GM10248 (cell line): ENCODE measurements at regions of chr10 and their contacts with region 1.

Region 1: DNA sequence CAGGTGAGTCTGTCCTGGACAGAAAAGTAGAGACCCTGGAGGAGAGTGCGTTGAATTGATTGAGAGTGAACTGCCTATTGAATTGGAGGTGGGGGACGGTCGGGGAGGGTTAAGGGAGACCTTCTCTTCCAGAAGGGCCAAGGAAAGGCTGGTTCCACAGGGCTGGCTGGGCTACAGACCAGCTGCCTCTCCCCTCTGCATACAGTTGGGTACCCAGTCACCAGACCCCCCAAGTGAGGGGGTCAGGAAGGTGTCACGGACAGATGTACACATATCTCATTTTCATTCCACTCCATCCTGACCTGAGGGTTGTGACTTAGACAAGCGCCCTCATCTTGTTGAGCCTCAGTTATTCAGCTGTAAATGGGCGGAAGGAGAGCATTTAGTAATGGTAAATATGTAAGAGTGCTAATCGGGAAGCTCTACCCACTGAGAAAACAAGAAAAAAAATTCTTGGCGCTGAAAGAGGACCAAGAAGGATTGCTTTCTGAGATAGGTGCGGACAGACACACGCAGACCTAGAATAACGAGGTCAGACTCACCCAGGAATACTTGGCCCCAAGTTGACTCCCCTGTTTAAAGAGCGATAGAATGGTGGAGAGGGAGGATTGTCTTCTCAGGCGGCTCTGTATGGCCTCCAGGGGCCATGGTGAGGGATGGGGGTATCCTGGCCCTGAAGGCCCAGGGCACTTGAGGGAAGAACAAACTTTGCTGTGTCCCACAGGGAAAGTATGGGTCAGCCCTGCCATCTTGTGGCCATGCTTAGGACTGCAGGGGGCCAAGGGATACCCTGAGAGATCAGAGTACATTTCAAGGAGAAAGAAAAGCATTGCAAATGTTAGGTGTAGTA is 7.2 kb upstream of the MBL2 start:
- DNase-seq: peak; percentile 71
- CTCF ChIP-seq: peak; percentile 94

Region 2: DNA sequence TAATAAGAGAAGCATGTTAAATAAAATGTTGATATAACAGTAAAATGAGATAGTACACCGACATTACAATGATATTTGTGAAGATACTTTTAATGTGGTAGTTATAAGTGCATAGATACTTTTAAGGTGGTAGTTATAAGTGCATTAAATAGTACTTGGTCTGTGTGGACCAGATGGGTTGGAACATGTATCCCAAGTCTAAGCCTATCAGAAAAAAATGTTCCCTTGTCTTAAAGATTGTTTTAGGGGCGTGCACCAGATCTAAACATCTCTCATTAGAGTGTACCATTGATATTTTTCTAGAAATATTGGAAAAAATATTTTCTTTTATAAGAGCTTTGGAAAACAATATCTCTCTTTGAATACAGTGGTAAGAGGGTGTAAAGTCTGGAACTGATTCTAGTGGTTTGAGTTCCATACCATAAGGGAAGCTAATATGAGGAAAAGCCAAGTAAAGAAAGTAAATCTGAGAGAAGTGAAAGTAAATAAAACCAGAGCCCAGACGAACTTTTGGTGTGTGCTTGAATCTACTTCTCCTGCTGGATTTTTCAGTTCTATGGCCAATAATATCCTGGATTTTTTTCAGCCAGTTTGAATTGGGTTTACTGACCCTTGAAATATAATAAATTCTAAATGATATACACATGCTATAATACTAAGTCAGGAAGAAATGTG is 182.4 kb before region 1 on chr10:
- CTCF ChIA-PET with region 1: no interaction called
- POLR2A ChIA-PET with region 1: no interaction called
- DNase-seq: no peak
- CTCF ChIP-seq: no peak

Region 3: GRCh38 chr10:52755297-52756062 is 24.3 kb before region 1 on chr10:
- CTCF ChIA-PET with region 1: interaction called, 356 read pairs
- POLR2A ChIA-PET with region 1: no interaction called
- DNase-seq: no peak
- CTCF ChIP-seq: no peak